Activated T-helper 2 cell treated with anti-CD3 and anti-CD28 coated beads, Interferon-gamma antibody, Interleukin-2, Interleukin-4, amounts not matched to agents 10 μg/mL and 5 μg/mL and 100 μg/mL, durations not matched to agents 14 hours and 24 hours and 36 hours (primary cell): ENCODE measurements at regions of chrX and their contacts with region 1.

Region 1: DNA sequence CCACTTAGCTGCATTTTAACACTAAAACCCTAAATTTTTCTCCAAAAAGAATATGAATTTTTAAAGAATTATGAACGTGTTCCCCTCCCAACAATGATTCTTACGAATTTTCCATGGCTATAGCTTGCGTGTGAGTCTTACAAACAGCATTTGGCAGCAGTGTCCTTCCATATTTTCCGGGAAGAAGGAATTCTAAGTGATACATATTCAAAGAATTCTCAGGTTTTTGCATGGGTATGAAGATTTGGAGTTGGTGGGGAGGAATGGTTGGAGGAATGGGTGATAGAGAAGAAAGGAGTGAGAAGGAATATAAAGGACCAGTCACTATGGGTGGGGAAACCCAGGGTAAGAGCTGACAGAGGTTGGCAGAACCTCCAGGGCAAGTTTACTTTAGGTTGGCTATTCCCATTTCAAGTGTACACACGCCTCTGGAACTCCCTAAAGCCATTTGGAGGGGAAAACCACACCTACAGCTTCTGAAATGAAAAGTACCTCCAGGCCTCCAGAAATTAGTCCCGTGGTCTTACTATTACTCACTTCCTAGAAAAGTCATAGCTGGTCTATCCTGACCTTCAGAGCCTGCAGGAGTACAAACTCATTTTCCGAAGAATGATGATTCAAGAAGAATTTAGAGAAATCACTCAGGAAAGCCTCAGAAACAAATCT is 420.8 kb upstream of the DIPK2B start:
- DNase-seq: no peak
- H3K4me3 Mint-ChIP-seq: no peak overlapping the region
- H3K27ac Mint-ChIP-seq: peak overlapping the region; percentile 80
- H3K4me1 Mint-ChIP-seq: peaks cover 18% of the 10 kb centered on the region
- H3K27me3 Mint-ChIP-seq: no peaks in the 10 kb centered on the region

Region 2: GRCh38 chrX:45324941-45325340 is 296.6 kb before region 1 on chrX:
- intact Hi-C with region 1: no loop called
- DNase-seq: no peak
- H3K4me3 Mint-ChIP-seq: no peak overlapping the region
- H3K27ac Mint-ChIP-seq: no peak overlapping the region
- H3K4me1 Mint-ChIP-seq: no peaks in the 10 kb centered on the region
- H3K27me3 Mint-ChIP-seq: no peaks in the 10 kb centered on the region

Region 3: GRCh38 chrX:45445745-45446412 is 175.6 kb before region 1 on chrX:
- intact Hi-C with region 1: loop called (anchors 10 kb)
- DNase-seq: no peak
- H3K4me3 Mint-ChIP-seq: no peak overlapping the region
- H3K27ac Mint-ChIP-seq: no peak overlapping the region
- H3K4me1 Mint-ChIP-seq: peaks cover 6% of the 10 kb centered on the region
- H3K27me3 Mint-ChIP-seq: peaks cover 1% of the 10 kb centered on the region

Region 4: GRCh38 chrX:45505214-45505613 is 116.3 kb before region 1 on chrX:
- intact Hi-C with region 1: loop called (anchors 10 kb)
- DNase-seq: no peak
- H3K4me3 Mint-ChIP-seq: no peak overlapping the region
- H3K27ac Mint-ChIP-seq: no peak overlapping the region
- H3K4me1 Mint-ChIP-seq: peaks cover 14% of the 10 kb centered on the region
- H3K27me3 Mint-ChIP-seq: no peaks in the 10 kb centered on the region

Region 5: DNA sequence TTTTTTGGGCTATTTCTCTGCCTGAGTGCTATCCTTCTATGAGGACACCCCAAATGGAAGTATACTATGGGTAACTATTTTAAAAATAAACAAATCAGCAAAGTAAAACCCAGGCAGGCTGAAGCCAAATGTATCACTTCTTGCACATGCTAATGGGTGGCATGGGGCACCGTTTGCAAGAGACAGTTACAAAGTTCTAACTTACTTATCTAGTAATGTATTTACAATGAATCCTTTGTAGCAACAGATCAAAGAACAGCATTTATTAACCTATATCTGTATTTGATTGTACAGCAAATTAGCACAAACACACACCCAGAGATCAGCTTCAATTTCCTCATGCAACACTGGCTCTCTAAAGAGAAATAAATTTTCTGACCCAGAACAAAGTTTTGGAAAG is 698.2 kb after region 1 on chrX:
- intact Hi-C with region 1: loop called (anchors 1 kb)
- DNase-seq: no peak
- H3K4me3 Mint-ChIP-seq: peak overlapping the region; percentile 2
- H3K27ac Mint-ChIP-seq: peak overlapping the region; percentile 91
- H3K4me1 Mint-ChIP-seq: peaks cover 58% of the 10 kb centered on the region
- H3K27me3 Mint-ChIP-seq: no peaks in the 10 kb centered on the region